Heart right ventricle (tissue), 16 donors: ENCODE measurements at regions of chr5 and their contacts with region 1.

Region 1: GRCh38 chr5:122259995-122260394 is 52.0 kb upstream of the SNCAIP start:
- DNase-seq: no peak
- ATAC-seq: no peak
- H3K4me3 ChIP-seq: no peak overlapping the region
- H3K27ac ChIP-seq: no peak overlapping the region
- H3K4me1 ChIP-seq: no peaks in the 10 kb centered on the region
- H3K27me3 ChIP-seq: peaks cover 0 to 4% (median 0%) of the 10 kb centered on the region in 7 donors
- CTCF ChIP-seq: no peak

Region 2: DNA sequence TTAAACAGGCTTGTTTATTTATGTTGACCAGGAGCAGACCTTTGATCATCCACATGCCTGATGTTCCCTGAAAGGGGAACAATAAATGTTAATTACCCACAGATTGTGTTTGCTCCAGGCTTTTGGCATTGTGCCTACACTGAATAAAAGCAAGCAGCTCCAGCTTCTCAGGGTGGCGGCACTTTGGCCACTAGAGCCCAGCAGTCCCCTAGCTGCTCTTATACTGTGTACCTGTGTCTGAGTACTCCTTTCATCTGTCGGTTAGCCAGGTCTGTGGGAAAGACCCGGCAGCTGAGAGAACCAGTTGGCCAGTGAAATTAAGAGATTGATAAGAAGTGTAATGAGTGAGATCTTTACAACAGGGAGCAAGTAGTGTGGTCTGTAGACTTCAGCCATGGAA is 663.1 kb before region 1 on chr5:
- intact Hi-C with region 1: loop called in 1 of 10 experiments (anchors 5 kb)
- DNase-seq: no peak
- ATAC-seq: no peak
- H3K4me3 ChIP-seq: no peak overlapping the region
- H3K27ac ChIP-seq: no peak overlapping the region
- H3K4me1 ChIP-seq: no peaks in the 10 kb centered on the region
- H3K27me3 ChIP-seq: no peaks in the 10 kb centered on the region
- CTCF ChIP-seq: no peak

Region 3: GRCh38 chr5:122454541-122454940 is 194.5 kb after region 1 on chr5:
- intact Hi-C with region 1: no loop called
- DNase-seq: no peak
- ATAC-seq: no peak
- H3K4me3 ChIP-seq: no peak overlapping the region
- H3K27ac ChIP-seq: no peak overlapping the region
- H3K4me1 ChIP-seq: no peaks in the 10 kb centered on the region
- H3K27me3 ChIP-seq: no peaks in the 10 kb centered on the region
- CTCF ChIP-seq: no peak